Caco-2 (cell line): ENCODE measurements at regions of chr1 and their contacts with region 1.

Region 1: DNA sequence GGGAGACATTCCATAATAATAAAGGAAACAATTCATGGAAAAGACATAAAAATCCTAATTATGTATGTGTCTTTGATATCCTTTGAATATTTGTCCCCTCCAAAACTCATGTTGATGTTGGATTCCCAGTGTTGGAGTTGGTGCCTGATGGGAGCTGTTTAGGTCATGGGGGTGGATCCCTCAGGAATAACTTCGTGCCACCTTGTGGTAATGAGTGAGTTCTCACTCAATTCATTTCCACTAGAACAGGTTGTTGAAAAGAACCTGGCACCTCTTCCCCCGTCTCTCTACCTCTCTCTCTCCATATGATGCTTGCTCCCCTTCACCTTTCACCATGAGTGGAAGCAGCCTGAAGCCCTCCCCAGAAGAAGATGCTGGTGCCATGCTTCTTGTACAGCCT is 76.3 kb downstream of the MAP3K21 start:
- DNase-seq: no peak
- H3K4me3 ChIP-seq: no peak overlapping the region
- H3K4me3 Mint-ChIP-seq: no peak overlapping the region
- H3K27ac Mint-ChIP-seq: no peak overlapping the region
- H3K4me1 ChIP-seq: no peaks in the 10 kb centered on the region
- H3K4me1 Mint-ChIP-seq: no peaks in the 10 kb centered on the region
- H3K27me3 ChIP-seq: no peaks in the 10 kb centered on the region
- H3K27me3 Mint-ChIP-seq: peaks cover 9% of the 10 kb centered on the region
- CTCF ChIP-seq: no peak

Region 2: GRCh38 chr1:233386336-233386735 is 17.5 kb before region 1 on chr1:
- CTCF ChIA-PET with region 1: no interaction called
- POLR2A ChIA-PET with region 1: interaction called, 11 read pairs
- intact Hi-C with region 1: no loop called
- DNase-seq: no peak
- H3K4me3 ChIP-seq: no peak overlapping the region
- H3K4me3 Mint-ChIP-seq: no peak overlapping the region
- H3K27ac Mint-ChIP-seq: no peak overlapping the region
- H3K4me1 ChIP-seq: peaks cover 5% of the 10 kb centered on the region; the same call in 1 of the 2 replicates
- H3K4me1 Mint-ChIP-seq: peaks cover 6% of the 10 kb centered on the region
- H3K27me3 ChIP-seq: no peaks in the 10 kb centered on the region
- H3K27me3 Mint-ChIP-seq: no peaks in the 10 kb centered on the region
- CTCF ChIP-seq: no peak